Heart right ventricle (tissue), 16 donors: ENCODE measurements at regions of chr6 and their contacts with region 1.

Region 1: GRCh38 chr6:161163466-161164181 is 110.2 kb downstream of the AGPAT4 start:
- DNase-seq: no peak
- ATAC-seq: no peak
- H3K4me3 ChIP-seq: no peak overlapping the region
- H3K27ac ChIP-seq: no peak overlapping the region
- H3K4me1 ChIP-seq: peaks cover 0 to 17% (median 0%) of the 10 kb centered on the region in 9 donors
- H3K27me3 ChIP-seq: no peaks in the 10 kb centered on the region
- CTCF ChIP-seq: no peak

Region 2: GRCh38 chr6:161139766-161140553 is 23.7 kb before region 1 on chr6:
- intact Hi-C with region 1: no loop called
- DNase-seq: peak in 1 of 2 donors; percentile 43
- ATAC-seq: peak in 6 of 8 donors; percentile 15 to 50 (median 33)
- H3K4me3 ChIP-seq: no peak overlapping the region
- H3K27ac ChIP-seq: no peak overlapping the region
- H3K4me1 ChIP-seq: no peaks in the 10 kb centered on the region
- H3K27me3 ChIP-seq: no peaks in the 10 kb centered on the region
- CTCF ChIP-seq: peak in 1 of 9 donors; percentile 46

Region 3: DNA sequence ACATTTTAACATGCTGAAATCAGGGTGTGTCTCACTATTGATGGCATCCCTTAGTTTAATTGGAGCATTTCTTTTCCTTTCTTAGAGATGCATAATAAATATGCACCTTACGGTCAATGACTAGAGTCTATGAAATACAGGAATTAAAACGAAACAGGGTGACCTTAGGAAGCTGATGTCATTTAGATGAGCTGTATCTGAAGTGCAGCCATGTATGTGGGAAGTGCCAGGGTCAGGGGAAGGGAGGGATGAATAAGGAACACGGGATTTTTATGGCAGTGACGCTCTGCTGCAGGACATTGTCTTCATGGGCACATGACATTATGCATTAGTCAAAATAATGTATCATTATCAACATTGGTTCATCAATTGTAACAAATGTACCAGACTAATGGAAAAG is 26.3 kb after region 1 on chr6:
- intact Hi-C with region 1: loop called in 1 of 10 experiments (anchors 2 kb)
- DNase-seq: no peak
- ATAC-seq: no peak
- H3K4me3 ChIP-seq: no peak overlapping the region
- H3K27ac ChIP-seq: no peak overlapping the region
- H3K4me1 ChIP-seq: peaks cover 0 to 4% (median 0%) of the 10 kb centered on the region in 9 donors
- H3K27me3 ChIP-seq: no peaks in the 10 kb centered on the region
- CTCF ChIP-seq: no peak

Region 4: GRCh38 chr6:161439093-161439492 is 275.5 kb after region 1 on chr6:
- intact Hi-C with region 1: no loop called
- DNase-seq: peak; percentile 48 to 88
- ATAC-seq: peak; percentile 37 to 85 (median 64)
- H3K4me3 ChIP-seq: peak overlapping the region in 7 of 10 donors; percentile 1 to 46 (median 37)
- H3K27ac ChIP-seq: peak overlapping the region in 8 of 10 donors; percentile 26 to 81 (median 68)
- H3K4me1 ChIP-seq: peaks cover 2 to 48% (median 22%) of the 10 kb centered on the region in 9 donors
- H3K27me3 ChIP-seq: no peaks in the 10 kb centered on the region
- CTCF ChIP-seq: no peak